ENCODE measurements at regions of chr6 and their contacts with region 1.

Region 1: GRCh38 chr6:159761873-159762680 is at the start of gene ACAT2:
- DNase-seq: peak; percentile 86 to 93
- H3K4me3 ChIP-seq: peak within 1 kb of the TSS; percentile 87 to 98 (median 90)
- H3K27ac ChIP-seq: peak within 1 kb of the TSS; percentile 95
- H3K4me1 ChIP-seq: peaks cover 6 to 15% (median 12%) of the 10 kb centered on the region in 4 experiments; a peak in 6 of 7 replicates
- H3K27me3 ChIP-seq: no peaks in the 10 kb centered on the region
- CTCF ChIP-seq: no peak
- EP300 ChIP-seq: no peak
- POLR2A ChIP-seq: peak; percentile 31 to 90
- RAD21 ChIP-seq: no peak
- total RNA-seq, gene ACAT2: 166 and 175 TPM in 2 replicates

Region 2: GRCh38 chr6:159595173-159595572 is 166.9 kb before region 1 on chr6:
- CTCF ChIA-PET with region 1: no interaction called
- POLR2A ChIA-PET with region 1: no interaction called
- DNase-seq: no peak
- H3K4me3 ChIP-seq: no peak overlapping the region
- H3K27ac ChIP-seq: no peak overlapping the region
- H3K4me1 ChIP-seq: no peaks in the 10 kb centered on the region; a peak in 1 of 7 replicates
- H3K27me3 ChIP-seq: no peaks in the 10 kb centered on the region
- CTCF ChIP-seq: no peak
- EP300 ChIP-seq: no peak
- POLR2A ChIP-seq: no peak
- RAD21 ChIP-seq: no peak

Region 3: DNA sequence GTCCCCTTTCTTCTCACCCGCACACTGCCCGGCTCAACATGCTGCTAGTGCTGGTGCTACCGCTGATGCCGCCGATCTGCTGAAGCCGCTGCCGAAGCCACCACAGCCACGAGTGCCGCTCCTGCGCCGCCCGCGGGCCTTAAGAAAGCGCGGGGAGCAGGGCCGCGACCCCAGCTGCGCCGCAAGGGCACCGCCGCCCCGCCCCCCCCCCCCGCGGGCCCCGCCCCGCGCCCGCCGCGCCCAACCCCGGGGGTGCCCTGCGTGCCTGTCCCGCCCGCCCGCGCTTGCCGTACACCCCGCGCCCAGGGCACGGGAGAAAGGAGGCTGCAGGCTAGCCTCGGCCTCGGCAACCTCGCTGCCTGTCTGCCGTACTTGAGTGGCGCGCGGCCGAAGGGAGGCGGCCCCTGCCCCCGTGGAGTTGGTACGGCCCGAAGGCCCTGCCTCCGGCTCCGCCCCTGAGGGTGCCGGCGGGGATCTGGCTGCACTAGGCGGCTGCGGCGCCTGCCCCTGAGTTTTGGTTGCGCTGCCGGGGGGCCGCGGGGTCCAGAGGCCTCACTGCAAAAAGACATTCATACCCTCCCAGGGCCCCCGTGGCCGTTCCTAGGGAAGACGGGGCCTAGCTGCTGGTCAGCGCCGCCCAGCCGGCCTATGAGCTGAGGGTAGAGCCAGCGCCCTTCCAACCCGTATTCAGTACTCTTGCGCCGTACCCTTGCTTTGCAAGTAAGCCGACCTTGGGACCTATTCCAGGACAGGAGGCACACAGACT is 68.8 kb before region 1 on chr6 and contains the start of gene SOD2:
- CTCF ChIA-PET with region 1: no interaction called
- POLR2A ChIA-PET with region 1: interaction called, 24 read pairs
- DNase-seq: peak; percentile 53 to 92
- H3K4me3 ChIP-seq: peak within 1 kb of the TSS; percentile 51 to 99 (median 88)
- H3K27ac ChIP-seq: peak within 1 kb of the TSS; percentile 95
- H3K4me1 ChIP-seq: peaks cover 3 to 15% (median 8%) of the 10 kb centered on the region in 4 experiments
- H3K27me3 ChIP-seq: no peaks in the 10 kb centered on the region
- CTCF ChIP-seq: no peak; a peak in 1 of 4 replicates
- EP300 ChIP-seq: peak in 1 of 2 experiments; percentile 96; a peak in 2 of 3 replicates
- POLR2A ChIP-seq: peak; percentile 74 to 85
- RAD21 ChIP-seq: no peak
- total RNA-seq, gene SOD2: 88.7 and 96.9 TPM in 2 replicates

Region 4: GRCh38 chr6:159726918-159727716 is 35.0 kb before region 1 on chr6 and contains the start of gene WTAP:
- CTCF ChIA-PET with region 1: interaction called, 4 read pairs
- POLR2A ChIA-PET with region 1: interaction called, 86 read pairs
- DNase-seq: peak; percentile 82 to 96
- H3K4me3 ChIP-seq: peak within 1 kb of the TSS; percentile 82 to 99 (median 96)
- H3K27ac ChIP-seq: peak within 1 kb of the TSS; percentile 100
- H3K4me1 ChIP-seq: peaks cover 0 to 5% (median 2%) of the 10 kb centered on the region in 4 experiments; a peak in 3 of 7 replicates
- H3K27me3 ChIP-seq: no peaks in the 10 kb centered on the region
- CTCF ChIP-seq: no peak
- EP300 ChIP-seq: peak in 1 of 2 experiments; percentile 36; a peak in 1 of 3 replicates
- POLR2A ChIP-seq: peak; percentile 97 to 98
- RAD21 ChIP-seq: no peak
- total RNA-seq, gene WTAP: 112 and 120 TPM in 2 replicates

Region 5: GRCh38 chr6:159739341-159739740 is 22.7 kb before region 1 on chr6:
- CTCF ChIA-PET with region 1: no interaction called
- POLR2A ChIA-PET with region 1: interaction called, 19 read pairs
- DNase-seq: no peak
- H3K4me3 ChIP-seq: no peak overlapping the region
- H3K27ac ChIP-seq: no peak overlapping the region
- H3K4me1 ChIP-seq: peaks cover 0 to 3% (median 0%) of the 10 kb centered on the region in 4 experiments; a peak in 1 of 7 replicates
- H3K27me3 ChIP-seq: no peaks in the 10 kb centered on the region
- CTCF ChIP-seq: no peak
- EP300 ChIP-seq: no peak
- POLR2A ChIP-seq: no peak
- RAD21 ChIP-seq: no peak

Region 6: GRCh38 chr6:159772196-159772595 is 10.1 kb after region 1 on chr6:
- CTCF ChIA-PET with region 1: interaction called, 3 read pairs
- POLR2A ChIA-PET with region 1: interaction called, 15 read pairs
- DNase-seq: no peak
- H3K4me3 ChIP-seq: no peak overlapping the region
- H3K27ac ChIP-seq: no peak overlapping the region
- H3K4me1 ChIP-seq: no peaks in the 10 kb centered on the region
- H3K27me3 ChIP-seq: no peaks in the 10 kb centered on the region
- CTCF ChIP-seq: no peak
- EP300 ChIP-seq: no peak
- POLR2A ChIP-seq: no peak
- RAD21 ChIP-seq: no peak

Region 7: DNA sequence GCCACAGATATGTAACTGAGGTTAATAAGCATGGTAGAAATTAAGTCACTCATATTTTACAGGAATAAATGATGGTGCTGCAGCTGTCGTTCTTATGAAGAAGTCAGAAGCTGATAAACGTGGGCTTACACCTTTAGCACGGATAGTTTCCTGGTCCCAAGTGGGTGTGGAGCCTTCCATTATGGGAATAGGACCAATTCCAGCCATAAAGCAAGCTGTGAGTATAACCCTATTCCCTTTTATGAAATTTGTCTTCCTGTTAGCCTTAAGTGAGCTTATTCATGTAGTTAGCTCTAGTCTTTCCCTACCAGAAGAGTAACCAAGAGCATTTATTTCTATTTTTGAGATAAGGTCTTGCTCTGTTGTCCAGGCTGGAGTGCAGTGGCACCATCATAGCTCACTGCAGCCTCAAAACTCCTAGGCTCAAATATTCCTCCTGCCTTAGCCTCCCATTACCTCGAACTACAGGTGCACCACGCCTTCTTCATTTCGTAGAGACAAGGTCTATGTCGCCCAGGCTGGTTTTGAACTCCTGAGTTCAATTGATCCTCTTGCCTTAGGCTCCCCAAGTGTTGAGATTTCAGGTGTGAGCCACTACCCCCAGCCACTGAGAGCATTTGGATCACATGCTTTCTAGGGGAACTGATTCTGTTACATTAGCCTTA is 15.3 kb after region 1 on chr6:
- CTCF ChIA-PET with region 1: interaction called, 3 read pairs
- POLR2A ChIA-PET with region 1: interaction called, 38 read pairs
- DNase-seq: no peak
- H3K4me3 ChIP-seq: no peak overlapping the region
- H3K27ac ChIP-seq: no peak overlapping the region
- H3K4me1 ChIP-seq: no peaks in the 10 kb centered on the region
- H3K27me3 ChIP-seq: no peaks in the 10 kb centered on the region
- CTCF ChIP-seq: no peak
- EP300 ChIP-seq: no peak
- POLR2A ChIP-seq: 0 out of 3 replicates have a peak, but pooled peaks of 1 of the 2 experiments have one; percentile 34
- RAD21 ChIP-seq: no peak

Region 8: GRCh38 chr6:159842035-159842434 is 80.0 kb after region 1 on chr6:
- CTCF ChIA-PET with region 1: no interaction called
- POLR2A ChIA-PET with region 1: no interaction called
- DNase-seq: no peak
- H3K4me3 ChIP-seq: no peak overlapping the region
- H3K27ac ChIP-seq: no peak overlapping the region
- H3K4me1 ChIP-seq: peaks cover 0 to 7% (median 4%) of the 10 kb centered on the region in 4 experiments; a peak in 4 of 7 replicates
- H3K27me3 ChIP-seq: no peaks in the 10 kb centered on the region
- CTCF ChIP-seq: peak in 2 of 3 experiments; percentile 53 to 60; a peak in 3 of 4 replicates
- EP300 ChIP-seq: no peak
- POLR2A ChIP-seq: no peak
- RAD21 ChIP-seq: peak; percentile 21 to 47; a peak in 2 of 4 replicates